Activated naive CD8-positive, alpha-beta T cell treated with anti-CD3 and anti-CD28 coated beads, Interleukin-2, amount 10 ng/mL, durations not matched to agents 7 days and 5 days (primary cell): ENCODE measurements at regions of chr3 and their contacts with region 1.

Region 1: GRCh38 chr3:118884748-118885206 is 149.9 kb downstream of the IGSF11 start:
- DNase-seq: peak; percentile 83
- ATAC-seq: peak; percentile 89
- H3K4me3 Mint-ChIP-seq: peak overlapping the region; percentile 21
- H3K27ac Mint-ChIP-seq: no peak overlapping the region
- H3K4me1 Mint-ChIP-seq: peaks cover 15% of the 10 kb centered on the region
- H3K27me3 Mint-ChIP-seq: peaks cover 17% of the 10 kb centered on the region

Region 2: DNA sequence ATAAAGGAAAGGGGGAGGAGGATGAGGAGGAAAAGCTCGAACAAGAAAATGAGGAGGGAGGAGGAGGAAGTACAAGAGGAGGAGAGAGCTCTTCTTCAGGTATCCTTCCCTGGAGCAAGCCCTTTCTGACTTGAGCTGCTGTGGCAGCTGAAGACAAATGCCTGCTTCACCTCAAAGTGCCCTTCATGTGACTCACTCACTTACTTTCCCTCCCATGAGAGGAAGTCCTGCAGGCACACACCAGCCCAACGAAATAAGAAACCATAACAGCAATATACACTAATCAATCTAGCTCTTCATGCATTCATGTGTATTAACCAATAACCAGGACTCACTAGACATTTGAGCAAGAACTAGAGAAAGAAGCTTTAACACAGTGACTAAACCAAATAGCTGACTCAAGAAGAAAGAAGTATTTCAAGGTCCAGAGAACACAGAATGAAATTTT is 102.0 kb before region 1 on chr3:
- POLR2A ChIA-PET with region 1: no interaction called
- DNase-seq: no peak
- ATAC-seq: no peak
- H3K4me3 Mint-ChIP-seq: no peak overlapping the region
- H3K27ac Mint-ChIP-seq: no peak overlapping the region
- H3K4me1 Mint-ChIP-seq: no peaks in the 10 kb centered on the region
- H3K27me3 Mint-ChIP-seq: peaks cover 14% of the 10 kb centered on the region

Region 3: DNA sequence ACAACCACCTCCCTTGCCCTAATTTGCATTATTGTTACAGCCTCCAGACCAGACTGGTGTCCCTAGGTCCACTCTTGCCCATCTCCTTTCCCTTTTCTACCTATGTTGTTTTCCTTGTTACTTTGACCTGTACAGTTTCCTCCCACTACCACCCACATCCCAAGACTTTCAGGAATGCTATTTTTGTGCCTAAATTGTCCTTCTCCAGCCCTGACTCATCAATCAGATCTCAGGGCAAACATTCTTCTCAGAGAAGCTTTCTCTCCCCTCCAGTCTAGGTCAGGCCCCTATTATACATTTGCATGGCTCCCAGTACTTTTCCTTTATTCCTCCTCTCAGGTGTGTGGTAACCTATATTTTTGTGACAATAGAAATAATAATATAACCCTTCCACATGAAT is 91.6 kb before region 1 on chr3:
- POLR2A ChIA-PET with region 1: no interaction called
- DNase-seq: no peak
- ATAC-seq: no peak
- H3K4me3 Mint-ChIP-seq: no peak overlapping the region
- H3K27ac Mint-ChIP-seq: no peak overlapping the region
- H3K4me1 Mint-ChIP-seq: no peaks in the 10 kb centered on the region
- H3K27me3 Mint-ChIP-seq: peaks cover 6% of the 10 kb centered on the region

Region 4: GRCh38 chr3:118900737-118901525 is 16.2 kb after region 1 on chr3:
- POLR2A ChIA-PET with region 1: no interaction called
- DNase-seq: no peak
- ATAC-seq: peak; percentile 42
- H3K4me3 Mint-ChIP-seq: no peak overlapping the region
- H3K27ac Mint-ChIP-seq: no peak overlapping the region
- H3K4me1 Mint-ChIP-seq: peaks cover 4% of the 10 kb centered on the region
- H3K27me3 Mint-ChIP-seq: peaks cover 3% of the 10 kb centered on the region

Region 5: GRCh38 chr3:119034256-119035013 is 149.7 kb after region 1 on chr3 and contains the start of gene IGSF11:
- POLR2A ChIA-PET with region 1: interaction called, 21 read pairs
- DNase-seq: peak; percentile 86
- ATAC-seq: peak; percentile 92
- H3K4me3 Mint-ChIP-seq: peak within 1 kb of the TSS; percentile 90
- H3K27ac Mint-ChIP-seq: peak within 1 kb of the TSS; percentile 76
- H3K4me1 Mint-ChIP-seq: peaks cover 4% of the 10 kb centered on the region
- H3K27me3 Mint-ChIP-seq: peaks cover 57% of the 10 kb centered on the region
- total RNA-seq, gene IGSF11: 1.9 to 2.4 TPM